GM12878 (cell line): ENCODE measurements at regions of chr14 and their contacts with region 1.

Region 1: GRCh38 chr14:98198385-98198784 is 1073.6 kb downstream of the BCL11B start:
- DNase-seq: no peak
- ATAC-seq: peak; percentile 86
- H3K4me3 ChIP-seq: no peak overlapping the region
- H3K27ac ChIP-seq: no peak overlapping the region; the same call in none of the 2 replicates
- H3K4me1 ChIP-seq: no peaks in the 10 kb centered on the region; the same call in 1 of the 2 replicates
- H3K27me3 ChIP-seq: no peaks in the 10 kb centered on the region
- CTCF ChIP-seq: no peak
- EP300 ChIP-seq: peak; percentile 35 to 80; a peak in 2 of 4 replicates
- POLR2A ChIP-seq: no peak
- RAD21 ChIP-seq: no peak

Region 2: DNA sequence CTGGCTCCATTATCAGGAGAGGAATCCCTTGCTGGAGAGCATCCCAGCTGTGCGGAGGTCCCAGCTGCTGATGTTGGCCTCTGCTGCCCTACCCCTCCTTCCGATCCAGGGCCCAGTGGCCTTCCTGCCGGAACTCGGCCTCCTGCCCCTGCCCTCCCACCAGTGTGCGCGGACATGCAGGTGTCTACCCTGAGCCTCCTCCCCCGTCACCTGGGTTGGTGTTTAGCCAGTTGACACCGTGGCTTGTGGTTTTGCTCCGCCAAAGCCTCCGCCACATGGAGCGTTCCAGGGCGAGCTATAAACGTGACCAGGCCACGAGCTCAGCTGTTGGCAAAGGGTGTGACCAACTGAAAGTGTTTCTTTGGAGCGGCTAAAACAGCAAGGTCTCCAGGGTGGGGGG is 30.7 kb before region 1 on chr14:
- CTCF ChIA-PET with region 1: interaction called, 5 read pairs
- POLR2A ChIA-PET with region 1: interaction called, 4 read pairs
- RAD21 ChIA-PET with region 1: interaction called, 110 read pairs
- SMC1A ChIA-PET with region 1: interaction called, 32 read pairs
- in situ Hi-C with region 1: no loop called
- intact Hi-C with region 1: loop called (anchors 2 kb)
- DNase-seq: no peak
- ATAC-seq: no peak
- H3K4me3 ChIP-seq: no peak overlapping the region
- H3K27ac ChIP-seq: no peak overlapping the region
- H3K4me1 ChIP-seq: peaks cover 5% of the 10 kb centered on the region
- H3K27me3 ChIP-seq: no peaks in the 10 kb centered on the region
- CTCF ChIP-seq: no peak
- EP300 ChIP-seq: no peak
- POLR2A ChIP-seq: no peak
- RAD21 ChIP-seq: no peak

Region 3: GRCh38 chr14:98182393-98183055 is 15.9 kb before region 1 on chr14:
- CTCF ChIA-PET with region 1: interaction called, 15 read pairs
- POLR2A ChIA-PET with region 1: interaction called, 14 read pairs
- RAD21 ChIA-PET with region 1: interaction called, 309 read pairs
- SMC1A ChIA-PET with region 1: interaction called, 47 read pairs
- in situ Hi-C with region 1: no loop called
- intact Hi-C with region 1: no loop called
- DNase-seq: no peak
- ATAC-seq: peak; percentile 35; the same call in 2 of the 3 replicates
- H3K4me3 ChIP-seq: no peak overlapping the region
- H3K27ac ChIP-seq: no peak overlapping the region
- H3K4me1 ChIP-seq: no peaks in the 10 kb centered on the region
- H3K27me3 ChIP-seq: no peaks in the 10 kb centered on the region
- CTCF ChIP-seq: no peak
- EP300 ChIP-seq: no peak
- POLR2A ChIP-seq: no peak
- RAD21 ChIP-seq: no peak

Region 4: DNA sequence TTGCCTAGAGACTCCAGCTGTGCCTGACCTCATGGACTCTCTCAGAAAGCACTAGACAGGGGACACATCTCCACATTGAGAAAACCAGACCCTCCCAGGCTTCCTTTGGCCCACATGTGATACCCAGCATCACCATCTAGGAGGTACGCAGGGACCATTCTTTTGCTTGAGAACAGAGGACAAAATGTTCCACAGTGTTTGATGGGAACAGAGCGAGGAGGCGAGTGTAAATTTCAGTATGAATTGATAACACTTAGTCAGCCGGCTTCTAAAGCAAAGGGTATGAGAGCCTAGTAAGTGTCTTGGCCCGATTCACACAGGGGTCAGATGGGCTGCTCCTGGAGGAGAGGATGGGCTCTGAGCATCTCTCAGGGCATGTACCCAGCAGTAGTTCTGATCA is 21.3 kb after region 1 on chr14:
- CTCF ChIA-PET with region 1: interaction called, 10 read pairs
- POLR2A ChIA-PET with region 1: interaction called, 4 read pairs
- RAD21 ChIA-PET with region 1: interaction called, 41 read pairs
- SMC1A ChIA-PET with region 1: interaction called, 85 read pairs
- in situ Hi-C with region 1: no loop called
- intact Hi-C with region 1: no loop called
- DNase-seq: no peak
- ATAC-seq: peak; percentile 24; the same call in 1 of the 3 replicates
- H3K4me3 ChIP-seq: no peak overlapping the region
- H3K27ac ChIP-seq: no peak overlapping the region
- H3K4me1 ChIP-seq: no peaks in the 10 kb centered on the region; the same call in 1 of the 2 replicates
- H3K27me3 ChIP-seq: no peaks in the 10 kb centered on the region
- CTCF ChIP-seq: no peak
- EP300 ChIP-seq: no peak
- POLR2A ChIP-seq: no peak
- RAD21 ChIP-seq: no peak

Region 5: GRCh38 chr14:98323836-98324235 is 125.5 kb after region 1 on chr14:
- CTCF ChIA-PET with region 1: no interaction called
- POLR2A ChIA-PET with region 1: no interaction called
- RAD21 ChIA-PET with region 1: interaction called, 10 read pairs
- SMC1A ChIA-PET with region 1: interaction called, 8 read pairs
- in situ Hi-C with region 1: no loop called
- intact Hi-C with region 1: no loop called
- DNase-seq: no peak
- ATAC-seq: no peak
- H3K4me3 ChIP-seq: no peak overlapping the region
- H3K27ac ChIP-seq: no peak overlapping the region
- H3K4me1 ChIP-seq: no peaks in the 10 kb centered on the region
- H3K27me3 ChIP-seq: no peaks in the 10 kb centered on the region
- CTCF ChIP-seq: no peak
- EP300 ChIP-seq: no peak
- POLR2A ChIP-seq: no peak
- RAD21 ChIP-seq: no peak

Region 6: GRCh38 chr14:98665007-98665406 is 466.6 kb after region 1 on chr14:
- CTCF ChIA-PET with region 1: no interaction called
- POLR2A ChIA-PET with region 1: no interaction called
- RAD21 ChIA-PET with region 1: no interaction called
- SMC1A ChIA-PET with region 1: no interaction called
- in situ Hi-C with region 1: no loop called
- intact Hi-C with region 1: no loop called
- DNase-seq: no peak
- ATAC-seq: no peak
- H3K4me3 ChIP-seq: no peak overlapping the region
- H3K27ac ChIP-seq: no peak overlapping the region
- H3K4me1 ChIP-seq: no peaks in the 10 kb centered on the region
- H3K27me3 ChIP-seq: no peaks in the 10 kb centered on the region
- CTCF ChIP-seq: no peak
- EP300 ChIP-seq: no peak
- POLR2A ChIP-seq: no peak
- RAD21 ChIP-seq: no peak